ENCODE measurements at regions of chr17 and their contacts with region 1.

Region 1: GRCh38 chr17:41966463-41967140 is at the start of gene CNP:
- DNase-seq: peak; percentile 82
- ATAC-seq: peak; percentile 73
- H3K4me3 ChIP-seq: peak within 1 kb of the TSS; percentile 92 to 96 (median 93)
- H3K27ac ChIP-seq: peak within 1 kb of the TSS; percentile 83
- H3K4me1 ChIP-seq: peaks cover 68% of the 10 kb centered on the region
- H3K27me3 ChIP-seq: peaks cover 0 to 11% of the 10 kb centered on the region in 2 experiments; a peak in 2 of 5 replicates
- CTCF ChIP-seq: no peak
- EP300 ChIP-seq: 0 out of 4 replicates have a peak, but pooled peaks have one; percentile 22 to 33
- POLR2A ChIP-seq: peak; percentile 59 to 95; a peak in 3 of 4 replicates
- RAD21 ChIP-seq: peak; percentile 72
- total RNA-seq, gene CNP: 161 and 170 TPM in 2 replicates

Region 2: GRCh38 chr17:41680418-41681040 is 286.1 kb before region 1 on chr17:
- CTCF ChIA-PET with region 1: no interaction called
- POLR2A ChIA-PET with region 1: no interaction called
- in situ Hi-C with region 1: no loop called
- intact Hi-C with region 1: no loop called
- DNase-seq: no peak
- ATAC-seq: no peak
- H3K4me3 ChIP-seq: no peak overlapping the region
- H3K27ac ChIP-seq: no peak overlapping the region
- H3K4me1 ChIP-seq: peaks cover 39% of the 10 kb centered on the region
- H3K27me3 ChIP-seq: peaks cover 2 to 8% of the 10 kb centered on the region in 2 experiments; a peak in 4 of 5 replicates
- CTCF ChIP-seq: no peak
- EP300 ChIP-seq: no peak
- POLR2A ChIP-seq: no peak
- RAD21 ChIP-seq: no peak

Region 3: DNA sequence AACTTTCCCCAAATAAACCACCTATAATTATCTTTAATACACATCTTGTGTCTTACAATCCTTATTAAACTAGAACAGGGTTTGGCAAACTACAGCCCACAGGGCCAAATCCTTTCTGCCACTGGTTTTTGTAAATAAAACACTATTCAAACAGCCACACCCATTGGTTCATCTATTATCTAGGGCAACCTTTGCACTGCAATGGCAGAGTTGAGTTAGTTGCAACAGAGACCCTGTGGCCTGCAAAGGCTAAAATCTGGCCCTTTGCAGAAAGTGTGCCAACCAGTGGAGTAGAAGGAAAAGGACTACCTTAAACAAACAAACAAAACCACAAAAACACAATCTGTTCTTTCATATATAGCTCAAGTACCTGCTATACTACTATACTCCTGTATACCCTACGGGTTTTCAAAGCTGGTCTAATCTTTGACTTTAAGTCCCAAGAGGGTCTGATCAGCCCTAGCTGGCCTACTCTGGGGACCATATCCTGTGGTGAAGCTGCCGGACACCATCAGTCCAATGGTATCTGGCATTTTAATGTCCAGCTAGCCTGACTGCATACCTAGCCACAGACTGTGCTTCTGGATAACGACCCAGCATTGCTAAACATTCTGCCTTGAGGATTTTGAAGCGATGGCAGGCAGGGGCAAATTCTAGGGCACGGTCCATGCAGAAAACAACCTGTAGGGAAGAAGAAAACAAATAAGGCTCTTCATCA is 23.3 kb after region 1 on chr17:
- CTCF ChIA-PET with region 1: no interaction called
- POLR2A ChIA-PET with region 1: interaction called, 28 read pairs
- in situ Hi-C with region 1: no loop called
- intact Hi-C with region 1: no loop called
- DNase-seq: peak; percentile 94
- ATAC-seq: peak; percentile 97
- H3K4me3 ChIP-seq: no peak overlapping the region
- H3K27ac ChIP-seq: peak overlapping the region; percentile 57
- H3K4me1 ChIP-seq: peaks cover 36% of the 10 kb centered on the region
- H3K27me3 ChIP-seq: no peaks in the 10 kb centered on the region
- CTCF ChIP-seq: peak; percentile 33
- EP300 ChIP-seq: peak in 1 of 2 experiments; percentile 73; a peak in 2 of 4 replicates
- POLR2A ChIP-seq: no peak
- RAD21 ChIP-seq: peak; percentile 35; the same call in 1 of the 2 replicates

Region 4: DNA sequence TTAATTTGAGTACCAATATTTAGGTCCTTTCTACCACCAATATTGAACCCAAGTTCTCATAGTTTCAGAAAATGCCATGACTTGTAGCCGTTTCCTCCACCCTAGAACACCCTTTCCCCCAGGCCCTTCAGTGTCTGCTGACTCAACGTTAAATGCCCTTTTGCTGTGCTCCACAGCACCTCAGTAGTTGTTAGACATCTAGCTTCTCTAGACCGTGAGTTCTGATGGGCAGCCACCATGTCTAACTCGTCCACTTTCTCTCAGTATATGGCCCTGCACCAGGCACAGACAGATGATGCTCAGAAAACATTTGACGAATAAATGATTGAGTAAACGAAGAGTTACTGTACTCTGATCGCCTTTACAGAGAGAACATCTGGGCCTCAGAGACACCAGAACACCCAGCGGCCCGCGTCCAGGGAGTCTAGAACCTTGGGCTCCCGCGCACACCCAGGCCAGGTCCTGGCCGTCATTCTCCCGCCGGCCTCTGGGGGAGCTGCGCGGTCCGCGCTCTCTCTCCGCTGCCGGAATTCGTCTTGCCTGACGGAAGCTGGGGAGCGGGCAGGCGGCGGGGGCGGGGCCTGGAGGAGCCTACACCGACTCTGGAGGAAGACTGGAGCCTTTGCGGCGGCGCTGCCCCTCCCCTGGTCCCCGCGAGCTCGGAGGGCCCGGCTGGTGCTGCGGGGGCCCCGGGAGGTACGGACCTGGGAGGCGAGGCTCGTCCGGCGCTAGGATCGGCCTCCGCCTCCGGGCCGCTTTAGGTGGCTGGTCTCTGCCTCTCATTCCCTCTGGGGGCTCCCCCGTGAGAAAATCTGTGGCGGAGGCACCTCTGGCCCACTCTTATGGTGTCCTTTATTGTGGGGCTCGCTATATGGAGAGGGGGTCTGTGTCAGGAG is 53.2 kb after region 1 on chr17 and contains the start of gene NKIRAS2:
- CTCF ChIA-PET with region 1: interaction called, 5 read pairs
- POLR2A ChIA-PET with region 1: interaction called, 180 read pairs
- in situ Hi-C with region 1: loop called (anchors 5 kb)
- intact Hi-C with region 1: no loop called
- DNase-seq: peak; percentile 89
- ATAC-seq: peak; percentile 75
- H3K4me3 ChIP-seq: peak within 1 kb of the TSS; percentile 89 to 91 (median 89)
- H3K27ac ChIP-seq: peak within 1 kb of the TSS; percentile 64
- H3K4me1 ChIP-seq: peaks cover 62% of the 10 kb centered on the region
- H3K27me3 ChIP-seq: peaks cover 0 to 3% of the 10 kb centered on the region in 2 experiments; a peak in 1 of 5 replicates
- CTCF ChIP-seq: peak; percentile 99
- EP300 ChIP-seq: no peak; a peak in 1 of 4 replicates
- POLR2A ChIP-seq: peak; percentile 24 to 88; a peak in 3 of 4 replicates
- RAD21 ChIP-seq: peak; percentile 37; the same call in 1 of the 2 replicates
- total RNA-seq, gene NKIRAS2: 26.8 and 27.9 TPM in 2 replicates

Region 5: DNA sequence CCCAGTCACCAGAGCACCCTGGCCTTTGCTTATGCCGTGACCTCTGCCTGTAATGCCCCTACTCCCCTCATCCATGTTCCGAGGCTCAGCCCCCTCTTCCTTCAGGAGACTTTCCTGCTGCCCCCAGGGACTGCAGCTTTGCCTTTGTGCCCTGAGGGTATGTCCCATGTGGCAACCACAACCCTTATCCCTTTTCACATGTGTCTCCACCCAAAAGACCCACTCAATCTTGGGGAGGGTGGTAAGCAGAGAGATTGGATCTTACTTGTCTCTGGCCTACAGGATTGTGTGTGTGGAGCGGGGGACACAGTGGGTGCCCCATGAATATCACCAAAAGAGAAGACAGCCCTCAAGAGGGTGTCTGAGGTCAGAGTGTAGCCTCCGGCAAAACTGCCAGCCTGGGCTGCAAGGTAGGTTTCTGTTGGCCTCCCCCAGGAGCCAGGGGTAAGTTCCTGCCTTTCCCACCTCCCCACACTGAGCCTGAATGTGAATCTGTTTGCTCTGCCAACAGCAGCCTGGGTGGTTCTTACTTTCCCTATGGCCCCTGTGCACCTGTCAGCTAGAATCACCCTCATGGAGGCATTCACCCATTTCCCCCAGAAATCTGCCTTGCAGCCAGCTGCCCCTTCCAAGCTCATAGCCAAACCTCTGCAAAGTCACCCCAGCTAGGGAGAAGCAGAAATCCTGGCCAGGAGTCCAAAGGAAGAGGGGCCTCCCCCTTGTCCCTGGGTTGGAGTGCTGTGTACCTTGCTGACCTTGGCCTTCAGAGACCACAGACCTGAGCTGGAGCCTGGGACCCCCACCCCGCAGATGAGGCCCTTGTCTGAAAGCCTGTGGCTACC is 95.3 kb after region 1 on chr17:
- CTCF ChIA-PET with region 1: interaction called, 9 read pairs
- POLR2A ChIA-PET with region 1: no interaction called
- in situ Hi-C with region 1: loop called (anchors 5 kb)
- intact Hi-C with region 1: loop called (anchors 1 kb)
- DNase-seq: no peak
- ATAC-seq: no peak; the same call in 2 of the 3 replicates
- H3K4me3 ChIP-seq: no peak overlapping the region
- H3K27ac ChIP-seq: no peak overlapping the region
- H3K4me1 ChIP-seq: no peaks in the 10 kb centered on the region
- H3K27me3 ChIP-seq: no peaks in the 10 kb centered on the region
- CTCF ChIP-seq: no peak
- EP300 ChIP-seq: no peak
- POLR2A ChIP-seq: no peak
- RAD21 ChIP-seq: no peak

Region 6: GRCh38 chr17:42112552-42113176 is 146.1 kb after region 1 on chr17 and contains the start of gene DHX58:
- CTCF ChIA-PET with region 1: interaction called, 17 read pairs
- POLR2A ChIA-PET with region 1: interaction called, 12 read pairs
- in situ Hi-C with region 1: loop called (anchors 5 kb)
- intact Hi-C with region 1: loop called (anchors 2 kb)
- DNase-seq: peak; percentile 64
- ATAC-seq: peak; percentile 80
- H3K4me3 ChIP-seq: peak within 1 kb of the TSS; percentile 43 to 73 (median 55); a peak in 5 of 6 replicates
- H3K27ac ChIP-seq: peak within 1 kb of the TSS; percentile 51
- H3K4me1 ChIP-seq: peaks cover 40% of the 10 kb centered on the region
- H3K27me3 ChIP-seq: no peaks in the 10 kb centered on the region
- CTCF ChIP-seq: peak; percentile 8; the same call in 1 of the 2 replicates
- EP300 ChIP-seq: no peak
- POLR2A ChIP-seq: peak in 1 of 2 experiments; percentile 74; a peak in 2 of 4 replicates
- RAD21 ChIP-seq: no peak
- total RNA-seq, gene DHX58: 3.9 and 6.7 TPM in 2 replicates

Region 7: GRCh38 chr17:42233941-42234340 is 267.3 kb after region 1 on chr17:
- CTCF ChIA-PET with region 1: no interaction called
- POLR2A ChIA-PET with region 1: no interaction called
- in situ Hi-C with region 1: no loop called
- intact Hi-C with region 1: no loop called
- DNase-seq: no peak
- ATAC-seq: no peak
- H3K4me3 ChIP-seq: no peak overlapping the region
- H3K27ac ChIP-seq: no peak overlapping the region
- H3K4me1 ChIP-seq: no peaks in the 10 kb centered on the region
- H3K27me3 ChIP-seq: no peaks in the 10 kb centered on the region
- CTCF ChIP-seq: no peak
- EP300 ChIP-seq: no peak
- POLR2A ChIP-seq: no peak
- RAD21 ChIP-seq: no peak

Region 8: DNA sequence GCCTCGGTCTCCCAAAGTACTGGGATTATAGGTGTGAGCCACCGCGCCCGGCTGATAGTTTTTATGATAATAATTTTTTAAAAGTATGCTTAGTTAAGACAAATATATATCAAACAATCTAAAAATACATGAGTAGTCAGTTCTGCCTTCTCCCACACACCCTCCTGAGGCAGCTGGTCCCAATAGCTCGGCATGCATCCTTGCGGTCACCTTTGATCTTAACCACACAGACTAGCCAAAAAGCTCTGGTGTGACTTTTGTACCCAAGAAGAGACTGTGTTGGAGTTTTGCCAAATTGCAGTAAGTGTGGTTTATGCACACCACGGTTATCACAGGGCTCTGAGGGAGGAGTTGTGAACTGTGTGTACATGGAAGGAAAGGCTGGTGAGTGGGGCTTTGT is 517.7 kb after region 1 on chr17:
- CTCF ChIA-PET with region 1: no interaction called
- POLR2A ChIA-PET with region 1: no interaction called
- in situ Hi-C with region 1: no loop called
- intact Hi-C with region 1: no loop called
- DNase-seq: peak; percentile 99
- ATAC-seq: peak; percentile 96
- H3K4me3 ChIP-seq: no peak overlapping the region
- H3K27ac ChIP-seq: peak overlapping the region; percentile 53
- H3K4me1 ChIP-seq: peaks cover 49% of the 10 kb centered on the region
- H3K27me3 ChIP-seq: no peaks in the 10 kb centered on the region
- CTCF ChIP-seq: no peak
- EP300 ChIP-seq: peak; percentile 6 to 88; a peak in 2 of 4 replicates
- POLR2A ChIP-seq: no peak
- RAD21 ChIP-seq: peak; percentile 29; the same call in 1 of the 2 replicates